A549 (cell line): ENCODE measurements at regions of chr2 and their contacts with region 1.

Region 1: DNA sequence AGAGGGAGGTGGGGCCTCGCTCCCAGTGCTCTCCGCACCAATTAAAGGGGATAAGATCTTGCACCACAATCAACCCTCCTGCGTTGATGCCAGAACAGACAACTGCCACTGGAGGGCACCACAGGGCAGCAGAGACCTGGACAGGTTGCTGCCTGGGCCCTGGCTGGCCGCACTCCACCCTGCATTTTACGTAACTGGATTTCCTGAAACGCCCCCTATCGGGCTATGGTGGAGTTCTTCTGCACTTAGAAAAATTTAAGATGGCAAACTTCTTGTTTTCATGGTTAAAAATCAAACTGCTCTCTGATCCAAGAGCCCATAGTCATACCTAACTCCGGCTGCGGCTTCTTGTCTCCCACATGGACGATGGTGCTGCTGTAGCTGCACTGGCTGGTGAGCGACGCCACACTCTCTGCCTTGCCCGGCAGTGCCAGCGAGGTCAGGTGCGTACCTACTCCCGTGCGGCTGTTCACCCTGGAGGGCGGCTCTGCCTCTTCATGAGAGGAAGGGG is 16.8 kb upstream of the HES6 start:
- DNase-seq: peak; percentile 86 to 95
- ATAC-seq: peak; percentile 81 to 86
- H3K4me3 ChIP-seq: no peak overlapping the region
- H3K27ac ChIP-seq: no peak overlapping the region
- H3K4me1 ChIP-seq: peaks cover 10% of the 10 kb centered on the region; the same call in 1 of the 3 replicates
- CTCF ChIP-seq: peak; percentile 99
- EP300 ChIP-seq: no peak
- POLR2A ChIP-seq: no peak
- RAD21 ChIP-seq: peak; percentile 95 to 96

Region 2: GRCh38 chr2:238158527-238159070 is 98.0 kb before region 1 on chr2 and contains the start of gene ERFE:
- CTCF ChIA-PET with region 1: interaction called, 10 read pairs
- POLR2A ChIA-PET with region 1: no interaction called
- DNase-seq: peak; percentile 49 to 58
- ATAC-seq: peak; percentile 40 to 66; a peak in 5 of 6 replicates
- H3K4me3 ChIP-seq: peak within 1 kb of the TSS; percentile 59
- H3K27ac ChIP-seq: peak within 1 kb of the TSS; percentile 72 to 98
- H3K4me1 ChIP-seq: peaks cover 15% of the 10 kb centered on the region; the same call in 2 of the 3 replicates
- CTCF ChIP-seq: peak; percentile 64
- EP300 ChIP-seq: no peak
- POLR2A ChIP-seq: 0 out of 2 replicates have a peak, but pooled peaks have one; percentile 13
- RAD21 ChIP-seq: peak in 1 of 2 experiments; percentile 46; a peak in 3 of 5 replicates
- polyA plus RNA-seq, gene ERFE: 2.6 and 3.7 TPM in 2 replicates

Region 3: GRCh38 chr2:238225911-238226697 is 30.5 kb before region 1 on chr2:
- CTCF ChIA-PET with region 1: no interaction called
- POLR2A ChIA-PET with region 1: no interaction called
- DNase-seq: no peak
- ATAC-seq: no peak
- H3K4me3 ChIP-seq: no peak overlapping the region
- H3K27ac ChIP-seq: no peak overlapping the region
- H3K4me1 ChIP-seq: no peaks in the 10 kb centered on the region
- CTCF ChIP-seq: no peak
- EP300 ChIP-seq: no peak
- POLR2A ChIP-seq: no peak
- RAD21 ChIP-seq: no peak

Region 4: GRCh38 chr2:238239872-238240751 is 16.5 kb before region 1 on chr2 and contains the start of gene HES6:
- CTCF ChIA-PET with region 1: interaction called, 29 read pairs
- POLR2A ChIA-PET with region 1: no interaction called
- DNase-seq: peak; percentile 83 to 88
- ATAC-seq: peak; percentile 80 to 90
- H3K4me3 ChIP-seq: peak within 1 kb of the TSS; percentile 81
- H3K27ac ChIP-seq: peak within 1 kb of the TSS; percentile 77 to 90
- H3K4me1 ChIP-seq: peaks cover 9% of the 10 kb centered on the region; the same call in 1 of the 3 replicates
- CTCF ChIP-seq: no peak
- EP300 ChIP-seq: no peak
- POLR2A ChIP-seq: peak; percentile 99
- RAD21 ChIP-seq: no peak
- polyA plus RNA-seq, gene HES6: 5.2 and 5.4 TPM in 2 replicates

Region 5: GRCh38 chr2:238294372-238295143 is 37.9 kb after region 1 on chr2:
- CTCF ChIA-PET with region 1: interaction called, 351 read pairs
- POLR2A ChIA-PET with region 1: no interaction called
- DNase-seq: no peak
- ATAC-seq: no peak
- H3K4me3 ChIP-seq: no peak overlapping the region
- H3K27ac ChIP-seq: peak overlapping the region; percentile 31 to 61; a peak in 3 of 6 replicates
- H3K4me1 ChIP-seq: peaks cover 46% of the 10 kb centered on the region
- CTCF ChIP-seq: no peak
- EP300 ChIP-seq: no peak
- POLR2A ChIP-seq: no peak
- RAD21 ChIP-seq: no peak

Region 6: GRCh38 chr2:238320246-238320647 is 63.6 kb after region 1 on chr2 and contains the start of gene TRAF3IP1:
- CTCF ChIA-PET with region 1: interaction called, 13 read pairs
- POLR2A ChIA-PET with region 1: no interaction called
- DNase-seq: peak; percentile 89 to 92
- ATAC-seq: peak; percentile 97
- H3K4me3 ChIP-seq: peak within 1 kb of the TSS; percentile 99
- H3K27ac ChIP-seq: peak within 1 kb of the TSS; percentile 90 to 95
- H3K4me1 ChIP-seq: peaks cover 13% of the 10 kb centered on the region; the same call in 2 of the 3 replicates
- CTCF ChIP-seq: no peak
- EP300 ChIP-seq: no peak
- POLR2A ChIP-seq: no peak; the same call in none of the 2 replicates
- RAD21 ChIP-seq: no peak
- polyA plus RNA-seq, gene TRAF3IP1: 10.6 and 10.9 TPM in 2 replicates

Region 7: GRCh38 chr2:238339395-238340213 is 83.0 kb after region 1 on chr2:
- CTCF ChIA-PET with region 1: interaction called, 15 read pairs
- POLR2A ChIA-PET with region 1: no interaction called
- DNase-seq: peak; percentile 29 to 49
- ATAC-seq: peak; percentile 86 to 87
- H3K4me3 ChIP-seq: no peak overlapping the region
- H3K27ac ChIP-seq: peak overlapping the region in 1 of 2 experiments; percentile 47; a peak in 3 of 6 replicates
- H3K4me1 ChIP-seq: peaks cover 6% of the 10 kb centered on the region; the same call in 2 of the 3 replicates
- CTCF ChIP-seq: peak; percentile 46; the same call in 1 of the 3 replicates
- EP300 ChIP-seq: no peak
- POLR2A ChIP-seq: no peak
- RAD21 ChIP-seq: peak; percentile 61 to 71

Region 8: GRCh38 chr2:238396663-238397062 is 140.0 kb after region 1 on chr2:
- CTCF ChIA-PET with region 1: no interaction called
- POLR2A ChIA-PET with region 1: no interaction called
- DNase-seq: no peak
- ATAC-seq: no peak
- H3K4me3 ChIP-seq: no peak overlapping the region
- H3K27ac ChIP-seq: no peak overlapping the region
- H3K4me1 ChIP-seq: no peaks in the 10 kb centered on the region
- CTCF ChIP-seq: no peak
- EP300 ChIP-seq: no peak
- POLR2A ChIP-seq: no peak
- RAD21 ChIP-seq: no peak